Naive thymus-derived CD4-positive, alpha-beta T cell (primary cell): ENCODE measurements at regions of chr20 and their contacts with region 1.

Region 1: DNA sequence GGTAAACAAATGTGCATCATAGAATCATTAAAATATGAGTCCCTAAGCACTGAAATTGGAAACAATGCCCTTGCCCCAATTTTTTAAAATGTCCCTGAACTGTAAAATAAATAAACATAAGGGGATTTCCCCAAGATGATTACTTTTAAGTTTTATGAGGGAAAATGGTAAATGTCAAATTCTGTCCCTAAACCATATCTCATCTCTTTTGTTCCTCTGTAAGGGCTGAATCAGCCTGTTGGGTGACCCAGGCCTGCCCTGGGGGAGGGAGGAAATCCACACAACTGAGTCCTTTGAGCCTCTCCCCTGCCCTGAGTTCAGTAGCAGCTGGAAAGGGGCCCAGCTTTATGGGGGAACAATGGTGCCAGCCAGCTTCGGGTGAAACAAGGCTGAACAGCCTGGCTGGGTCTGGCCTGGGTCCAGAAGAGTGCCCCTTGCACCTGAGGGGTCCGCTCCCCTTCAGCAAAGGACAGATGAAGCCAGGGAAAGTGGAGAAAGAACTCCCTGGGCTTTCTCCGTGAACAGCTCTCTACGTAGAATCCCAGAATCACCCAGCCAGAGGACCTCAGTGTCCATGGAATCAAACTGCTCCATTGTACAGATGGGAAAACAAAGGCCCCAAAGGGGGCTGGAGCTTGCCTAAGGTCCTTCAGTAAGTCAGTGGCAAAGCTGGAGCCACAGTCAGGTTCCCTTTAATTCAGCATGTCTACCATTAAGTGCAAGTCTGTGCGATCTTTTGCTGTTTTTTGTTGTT is 28.2 kb upstream of the ITCH start:
- DNase-seq: no peak
- ATAC-seq: no peak
- H3K4me3 ChIP-seq: no peak overlapping the region
- H3K4me3 Mint-ChIP-seq: no peak overlapping the region
- H3K27ac ChIP-seq: no peak overlapping the region
- H3K27ac Mint-ChIP-seq: peak overlapping the region in 1 of 9 donors; percentile 22
- H3K4me1 ChIP-seq: peaks cover 0 to 11% of the 10 kb centered on the region in 2 donors
- H3K4me1 Mint-ChIP-seq: peaks cover 0 to 3% (median 0%) of the 10 kb centered on the region in 7 donors
- H3K27me3 ChIP-seq: no peaks in the 10 kb centered on the region
- H3K27me3 Mint-ChIP-seq: peaks cover 0 to 2% (median 0%) of the 10 kb centered on the region in 5 donors

Region 2: DNA sequence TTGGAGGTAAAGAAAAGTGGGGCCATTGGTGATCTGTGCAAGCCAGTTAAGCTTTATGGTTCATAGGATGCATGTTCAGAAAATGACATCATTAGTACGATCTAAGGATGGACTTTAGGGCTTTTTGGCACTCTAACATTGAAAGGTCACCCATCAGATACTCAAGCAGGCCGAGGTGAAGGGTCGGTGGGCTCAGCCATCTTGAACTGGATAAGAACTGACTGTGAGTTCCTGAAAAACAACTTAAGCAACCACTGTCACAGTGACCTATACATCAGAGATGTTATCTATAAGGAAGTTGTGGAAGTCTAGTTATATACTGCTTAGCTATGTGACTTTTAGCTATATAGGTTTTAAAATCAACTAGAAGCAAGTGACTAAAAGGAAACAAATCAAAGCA is 15.3 kb after region 1 on chr20:
- CTCF ChIA-PET with region 1: interaction called, 11 read pairs
- POLR2A ChIA-PET with region 1: no interaction called
- intact Hi-C with region 1: no loop called
- DNase-seq: no peak
- ATAC-seq: peak; percentile 59
- H3K4me3 ChIP-seq: no peak overlapping the region
- H3K4me3 Mint-ChIP-seq: no peak overlapping the region
- H3K27ac ChIP-seq: no peak overlapping the region
- H3K27ac Mint-ChIP-seq: no peak overlapping the region
- H3K4me1 ChIP-seq: no peaks in the 10 kb centered on the region
- H3K4me1 Mint-ChIP-seq: peaks cover 0 to 7% (median 0%) of the 10 kb centered on the region in 7 donors
- H3K27me3 ChIP-seq: no peaks in the 10 kb centered on the region
- H3K27me3 Mint-ChIP-seq: no peaks in the 10 kb centered on the region